Natural killer cell (primary cell): ENCODE measurements at regions of chr12 and their contacts with region 1.

Region 1: GRCh38 chr12:54251667-54252284 is 28.1 kb downstream of the CBX5 start:
- DNase-seq: peak in 1 of 2 donors; percentile 72
- ATAC-seq: peak; percentile 67 to 90 (median 79)
- H3K4me3 ChIP-seq: no peak overlapping the region
- H3K4me3 Mint-ChIP-seq: no peak overlapping the region
- H3K27ac ChIP-seq: no peak overlapping the region
- H3K27ac Mint-ChIP-seq: no peak overlapping the region
- H3K4me1 ChIP-seq: no peaks in the 10 kb centered on the region
- H3K4me1 Mint-ChIP-seq: no peaks in the 10 kb centered on the region
- H3K27me3 ChIP-seq: no peaks in the 10 kb centered on the region
- H3K27me3 Mint-ChIP-seq: no peaks in the 10 kb centered on the region
- CTCF ChIP-seq: peak; percentile 70

Region 2: GRCh38 chr12:54359033-54359761 is 107.4 kb after region 1 on chr12:
- intact Hi-C with region 1: loop called (anchors 2 kb)
- DNase-seq: peak; percentile 86 to 98
- ATAC-seq: peak; percentile 88 to 97 (median 96)
- H3K4me3 ChIP-seq: peak overlapping the region; percentile 90
- H3K4me3 Mint-ChIP-seq: no peak overlapping the region
- H3K27ac ChIP-seq: peak overlapping the region; percentile 79
- H3K27ac Mint-ChIP-seq: no peak overlapping the region
- H3K4me1 ChIP-seq: peaks cover 30% of the 10 kb centered on the region
- H3K4me1 Mint-ChIP-seq: peaks cover 4 to 8% of the 10 kb centered on the region in 2 donors
- H3K27me3 ChIP-seq: no peaks in the 10 kb centered on the region
- H3K27me3 Mint-ChIP-seq: peaks cover 0 to 3% of the 10 kb centered on the region in 2 donors
- CTCF ChIP-seq: no peak

Region 3: GRCh38 chr12:54368709-54369583 is 117.2 kb after region 1 on chr12:
- intact Hi-C with region 1: loop called (anchors 1 kb)
- DNase-seq: peak; percentile 83 to 93
- ATAC-seq: peak; percentile 88 to 98 (median 92)
- H3K4me3 ChIP-seq: no peak overlapping the region
- H3K4me3 Mint-ChIP-seq: peak overlapping the region; percentile 86
- H3K27ac ChIP-seq: no peak overlapping the region
- H3K27ac Mint-ChIP-seq: peak overlapping the region; percentile 62 to 66
- H3K4me1 ChIP-seq: peaks cover 22% of the 10 kb centered on the region
- H3K4me1 Mint-ChIP-seq: peaks cover 23 to 29% of the 10 kb centered on the region in 2 donors
- H3K27me3 ChIP-seq: no peaks in the 10 kb centered on the region
- H3K27me3 Mint-ChIP-seq: no peaks in the 10 kb centered on the region
- CTCF ChIP-seq: peak; percentile 86

Region 4: DNA sequence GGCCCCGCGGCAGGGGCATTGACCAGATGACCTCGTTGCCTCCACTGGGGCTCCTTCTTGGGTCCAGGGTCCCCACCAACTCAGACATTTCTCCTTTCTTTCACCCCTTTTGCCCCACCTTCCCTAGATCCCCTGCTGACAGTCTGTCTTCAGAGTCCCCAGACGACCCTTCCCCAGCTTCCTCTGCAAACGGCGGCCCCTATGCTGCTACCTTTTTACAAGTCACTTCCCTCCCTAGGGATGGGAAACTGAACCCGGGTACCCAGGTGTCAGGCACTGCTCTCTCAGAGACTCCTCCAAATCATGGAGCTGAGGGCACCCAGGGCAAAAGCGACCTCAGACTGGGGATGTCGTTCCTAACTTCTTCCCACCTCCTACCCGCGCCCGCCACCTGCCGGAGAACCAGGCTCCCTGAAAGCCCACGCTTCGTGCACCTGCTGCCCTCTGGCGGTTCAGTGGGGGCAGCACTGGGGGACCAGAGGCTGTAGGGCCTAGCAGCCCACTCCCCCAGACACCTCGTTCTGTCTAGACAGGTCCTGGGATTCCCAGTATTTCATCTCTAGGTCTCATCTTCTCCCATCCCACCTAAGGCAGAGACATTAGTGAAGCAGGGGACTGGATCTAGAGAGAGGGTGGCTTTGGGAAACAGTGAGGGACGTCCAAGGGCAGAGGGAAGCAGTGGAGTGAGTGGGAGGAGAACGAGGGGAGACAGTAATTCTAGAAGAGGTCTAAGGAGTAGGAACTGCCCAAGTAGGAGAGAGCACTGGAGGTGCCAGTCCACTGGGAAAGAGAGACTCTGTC is 127.8 kb after region 1 on chr12:
- intact Hi-C with region 1: loop called (anchors 1 kb)
- DNase-seq: peak; percentile 87 to 93
- ATAC-seq: peak; percentile 94 to 99 (median 97)
- H3K4me3 ChIP-seq: no peak overlapping the region
- H3K4me3 Mint-ChIP-seq: peak overlapping the region; percentile 25
- H3K27ac ChIP-seq: no peak overlapping the region
- H3K27ac Mint-ChIP-seq: peak overlapping the region in 1 of 2 donors; percentile 40
- H3K4me1 ChIP-seq: peaks cover 20% of the 10 kb centered on the region
- H3K4me1 Mint-ChIP-seq: peaks cover 0 to 7% of the 10 kb centered on the region in 2 donors
- H3K27me3 ChIP-seq: no peaks in the 10 kb centered on the region
- H3K27me3 Mint-ChIP-seq: no peaks in the 10 kb centered on the region
- CTCF ChIP-seq: peak; percentile 100

Region 5: DNA sequence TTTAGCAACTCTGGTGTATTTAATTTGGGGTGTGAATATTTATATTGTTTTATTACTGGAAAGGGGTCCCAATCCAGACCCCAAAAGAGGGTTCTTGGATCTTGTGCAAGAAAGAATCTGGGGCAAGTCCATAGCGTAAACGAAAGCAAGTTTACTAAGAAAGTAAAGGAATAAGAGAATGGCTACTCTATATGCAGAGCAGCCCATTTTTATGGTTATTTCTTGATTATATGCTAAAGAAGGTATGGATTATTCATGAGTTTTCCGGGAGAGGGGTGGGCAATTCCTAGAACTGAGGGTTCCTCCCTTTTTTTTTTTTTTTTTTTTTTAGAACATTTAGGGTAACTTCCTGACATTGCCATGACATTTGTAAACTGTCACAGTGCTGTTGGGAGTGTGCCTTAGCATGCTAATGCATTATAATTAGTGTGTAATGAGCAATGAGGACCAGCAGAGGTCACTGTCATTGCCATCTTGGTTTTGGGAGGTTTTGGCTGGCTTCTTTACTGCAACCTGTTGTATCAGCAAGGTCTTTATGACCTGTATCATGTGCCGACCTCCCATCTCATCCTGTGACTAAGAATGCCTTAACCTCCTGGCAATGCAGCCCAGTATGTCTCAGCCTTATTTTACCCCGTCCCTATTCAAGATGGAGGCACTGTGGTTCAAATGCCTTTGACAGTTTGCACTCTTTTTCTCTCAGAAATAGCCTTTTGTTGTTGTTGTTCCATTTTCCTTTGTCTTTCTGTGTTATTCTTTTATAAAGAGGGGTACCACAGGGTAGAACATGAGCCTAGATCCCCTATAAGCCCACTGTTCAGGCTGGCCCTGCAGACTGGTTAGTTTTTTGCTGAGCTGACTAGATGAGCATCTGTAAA is 471.8 kb after region 1 on chr12:
- intact Hi-C with region 1: no loop called
- DNase-seq: peak in 1 of 2 donors; percentile 76
- ATAC-seq: peak; percentile 57 to 72 (median 72)
- H3K4me3 ChIP-seq: no peak overlapping the region
- H3K4me3 Mint-ChIP-seq: no peak overlapping the region
- H3K27ac ChIP-seq: no peak overlapping the region
- H3K27ac Mint-ChIP-seq: no peak overlapping the region
- H3K4me1 ChIP-seq: peaks cover 3% of the 10 kb centered on the region
- H3K4me1 Mint-ChIP-seq: peaks cover 13 to 16% of the 10 kb centered on the region in 2 donors
- H3K27me3 ChIP-seq: no peaks in the 10 kb centered on the region
- H3K27me3 Mint-ChIP-seq: peaks cover 12 to 32% of the 10 kb centered on the region in 2 donors
- CTCF ChIP-seq: peak; percentile 64